Caco-2 (cell line): ENCODE measurements at regions of chr1 and their contacts with region 1.

Region 1: GRCh38 chr1:63327417-63328139 is 5.2 kb downstream of the FOXD3 start:
- DNase-seq: peak; percentile 59 to 71
- H3K4me3 ChIP-seq: no peak overlapping the region
- H3K4me3 Mint-ChIP-seq: no peak overlapping the region
- H3K27ac Mint-ChIP-seq: no peak overlapping the region
- H3K4me1 ChIP-seq: no peaks in the 10 kb centered on the region
- H3K4me1 Mint-ChIP-seq: no peaks in the 10 kb centered on the region
- H3K27me3 ChIP-seq: no peaks in the 10 kb centered on the region
- H3K27me3 Mint-ChIP-seq: peaks cover 36% of the 10 kb centered on the region
- CTCF ChIP-seq: peak; percentile 53 to 63

Region 2: DNA sequence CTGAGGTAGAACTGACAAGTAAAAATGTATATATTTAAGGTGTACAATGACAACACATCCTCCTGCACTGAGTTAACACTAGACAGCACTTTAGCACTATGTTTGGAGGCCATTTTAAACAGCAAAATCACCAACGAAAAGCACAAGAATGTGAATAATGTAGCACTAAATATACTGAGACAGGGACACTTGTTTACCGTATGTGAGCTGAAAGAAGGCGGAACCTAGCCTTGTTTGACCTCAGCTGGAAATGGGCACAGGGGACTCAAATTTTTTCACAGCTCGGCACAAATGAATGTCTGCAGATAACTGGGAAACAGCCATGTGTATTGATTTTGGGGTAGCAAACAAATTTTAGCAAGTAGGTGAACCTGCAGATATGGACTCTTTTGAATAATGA is 561.6 kb before region 1 on chr1:
- CTCF ChIA-PET with region 1: interaction called, 10 read pairs
- POLR2A ChIA-PET with region 1: no interaction called
- intact Hi-C with region 1: no loop called
- DNase-seq: no peak
- H3K4me3 ChIP-seq: no peak overlapping the region
- H3K4me3 Mint-ChIP-seq: no peak overlapping the region
- H3K27ac Mint-ChIP-seq: peak overlapping the region; percentile 42
- H3K4me1 ChIP-seq: peaks cover 3% of the 10 kb centered on the region
- H3K4me1 Mint-ChIP-seq: peaks cover 7% of the 10 kb centered on the region
- H3K27me3 ChIP-seq: no peaks in the 10 kb centered on the region
- H3K27me3 Mint-ChIP-seq: no peaks in the 10 kb centered on the region
- CTCF ChIP-seq: no peak

Region 3: DNA sequence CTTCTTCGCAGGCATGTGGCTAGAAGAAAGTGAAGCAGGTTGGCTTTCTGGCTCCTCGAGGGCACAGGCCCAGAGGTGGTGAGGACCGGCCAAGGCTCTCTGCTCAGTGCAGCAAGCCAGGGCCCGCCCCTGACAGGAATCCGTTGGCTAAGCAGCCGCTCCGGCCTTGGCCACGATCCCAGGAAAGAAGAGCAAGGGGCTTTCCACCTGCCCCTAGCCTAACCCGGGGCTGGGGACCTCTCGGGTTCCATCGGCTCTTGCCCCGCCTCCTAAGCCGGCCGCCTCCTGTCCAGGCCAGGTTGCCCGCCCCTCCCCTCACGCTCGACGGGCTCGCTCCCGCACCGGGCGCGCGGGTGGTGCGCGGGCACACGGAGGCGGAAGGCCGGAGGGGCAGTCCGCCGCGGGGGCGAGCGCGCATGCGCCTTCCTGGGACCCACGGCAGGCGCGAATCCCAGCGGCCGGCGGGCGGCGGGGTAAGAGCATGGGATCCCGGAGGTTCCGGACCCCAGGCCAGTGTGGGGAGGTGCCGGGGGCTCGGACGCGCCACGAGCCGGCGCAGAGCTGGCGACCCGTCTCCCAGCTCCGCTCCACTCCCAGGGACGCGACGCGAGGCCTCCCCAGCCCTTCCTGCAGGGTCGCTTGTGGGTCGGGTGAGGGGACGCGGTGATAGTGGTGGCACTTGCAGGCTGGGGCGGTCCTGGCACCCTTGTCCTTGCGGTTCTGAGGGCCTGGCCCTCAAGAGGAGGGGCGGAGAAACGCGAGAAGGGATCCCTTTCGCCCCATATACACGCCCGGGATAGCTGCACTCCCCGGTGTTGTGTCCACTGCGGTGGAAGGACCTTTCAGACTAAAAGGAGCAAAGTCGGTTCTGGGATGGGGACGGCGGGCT is 39.9 kb after region 1 on chr1 and contains the start of gene ALG6:
- CTCF ChIA-PET with region 1: no interaction called
- POLR2A ChIA-PET with region 1: no interaction called
- intact Hi-C with region 1: loop called (anchors 5 kb)
- DNase-seq: peak; percentile 90 to 94
- H3K4me3 ChIP-seq: peak within 1 kb of the TSS; percentile 87
- H3K4me3 Mint-ChIP-seq: peak within 1 kb of the TSS; percentile 97
- H3K27ac Mint-ChIP-seq: peak within 1 kb of the TSS; percentile 82
- H3K4me1 ChIP-seq: no peaks in the 10 kb centered on the region
- H3K4me1 Mint-ChIP-seq: peaks cover 7% of the 10 kb centered on the region
- H3K27me3 ChIP-seq: no peaks in the 10 kb centered on the region
- H3K27me3 Mint-ChIP-seq: no peaks in the 10 kb centered on the region
- CTCF ChIP-seq: no peak
- total RNA-seq, gene ALG6: 9.2 and 9.4 TPM in 2 replicates

Region 4: GRCh38 chr1:63442141-63442475 is 114.5 kb after region 1 on chr1:
- CTCF ChIA-PET with region 1: interaction called, 3 read pairs
- POLR2A ChIA-PET with region 1: no interaction called
- intact Hi-C with region 1: loop called (anchors 2 kb)
- DNase-seq: no peak
- H3K4me3 ChIP-seq: no peak overlapping the region
- H3K4me3 Mint-ChIP-seq: no peak overlapping the region
- H3K27ac Mint-ChIP-seq: no peak overlapping the region
- H3K4me1 ChIP-seq: no peaks in the 10 kb centered on the region
- H3K4me1 Mint-ChIP-seq: no peaks in the 10 kb centered on the region
- H3K27me3 ChIP-seq: no peaks in the 10 kb centered on the region
- H3K27me3 Mint-ChIP-seq: no peaks in the 10 kb centered on the region
- CTCF ChIP-seq: no peak

Region 5: GRCh38 chr1:63537940-63538339 is 210.4 kb after region 1 on chr1:
- CTCF ChIA-PET with region 1: no interaction called
- POLR2A ChIA-PET with region 1: no interaction called
- intact Hi-C with region 1: loop called (anchors 10 kb)
- DNase-seq: no peak
- H3K4me3 ChIP-seq: no peak overlapping the region
- H3K4me3 Mint-ChIP-seq: no peak overlapping the region
- H3K27ac Mint-ChIP-seq: no peak overlapping the region
- H3K4me1 ChIP-seq: no peaks in the 10 kb centered on the region
- H3K4me1 Mint-ChIP-seq: no peaks in the 10 kb centered on the region
- H3K27me3 ChIP-seq: no peaks in the 10 kb centered on the region
- H3K27me3 Mint-ChIP-seq: no peaks in the 10 kb centered on the region
- CTCF ChIP-seq: peak in 1 of 2 experiments; percentile 22